Caco-2 (cell line): ENCODE measurements at regions of chr4 and their contacts with region 1.

Region 1: DNA sequence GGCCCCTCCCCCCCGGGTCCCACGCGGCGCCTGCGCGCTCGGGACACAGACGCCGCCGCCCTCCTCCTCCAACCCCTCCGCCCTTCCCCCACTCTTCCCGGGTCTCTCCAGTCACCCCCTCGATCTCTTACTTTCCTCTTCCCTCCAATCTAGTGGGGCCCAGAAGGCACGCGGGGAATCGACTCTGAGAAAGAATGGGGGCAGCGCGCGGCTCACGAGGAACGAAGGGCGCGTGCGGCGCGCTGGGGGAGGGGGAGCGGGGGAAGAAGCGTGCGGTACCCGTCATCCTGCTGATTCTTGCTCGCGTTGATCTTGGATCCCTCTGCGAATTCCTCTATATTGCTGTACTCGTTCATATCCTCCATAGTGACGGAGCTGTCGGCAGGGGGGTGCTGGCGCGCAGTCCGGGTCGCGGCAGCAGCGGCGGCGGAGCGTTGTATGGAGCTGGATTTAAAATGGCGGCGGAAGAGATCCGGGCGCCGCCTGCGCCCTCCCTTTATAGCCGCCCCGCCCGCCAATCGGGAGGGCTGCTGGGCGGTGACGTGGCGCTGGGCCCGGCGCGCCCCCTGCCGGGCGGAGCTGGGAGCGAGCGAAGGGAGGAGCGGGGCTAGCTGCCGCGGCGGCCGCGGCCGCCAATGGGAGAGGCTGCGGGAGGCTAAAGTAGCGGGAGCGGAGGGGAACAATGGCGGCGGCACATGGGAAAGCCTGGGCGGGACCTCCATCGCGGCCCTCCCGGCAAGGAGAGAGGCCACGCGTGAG is 1.1 kb downstream of the HNRNPDL start:
- DNase-seq: peak; percentile 89 to 96
- H3K4me3 ChIP-seq: peak overlapping the region; percentile 98
- H3K4me3 Mint-ChIP-seq: peak overlapping the region; percentile 89
- H3K27ac Mint-ChIP-seq: peak overlapping the region; percentile 99
- H3K4me1 ChIP-seq: peaks cover 11% of the 10 kb centered on the region
- H3K4me1 Mint-ChIP-seq: peaks cover 7% of the 10 kb centered on the region
- H3K27me3 ChIP-seq: no peaks in the 10 kb centered on the region
- H3K27me3 Mint-ChIP-seq: no peaks in the 10 kb centered on the region
- CTCF ChIP-seq: peak; percentile 51 to 93

Region 2: GRCh38 chr4:82415922-82416365 is 13.2 kb before region 1 on chr4:
- CTCF ChIA-PET with region 1: interaction called, 5 read pairs
- POLR2A ChIA-PET with region 1: interaction called, 11 read pairs
- intact Hi-C with region 1: no loop called
- DNase-seq: no peak
- H3K4me3 ChIP-seq: no peak overlapping the region
- H3K4me3 Mint-ChIP-seq: no peak overlapping the region
- H3K27ac Mint-ChIP-seq: no peak overlapping the region
- H3K4me1 ChIP-seq: no peaks in the 10 kb centered on the region
- H3K4me1 Mint-ChIP-seq: no peaks in the 10 kb centered on the region
- H3K27me3 ChIP-seq: no peaks in the 10 kb centered on the region
- H3K27me3 Mint-ChIP-seq: no peaks in the 10 kb centered on the region
- CTCF ChIP-seq: no peak

Region 3: GRCh38 chr4:82493721-82494425 is 64.7 kb after region 1 on chr4:
- CTCF ChIA-PET with region 1: no interaction called
- POLR2A ChIA-PET with region 1: no interaction called
- intact Hi-C with region 1: no loop called
- DNase-seq: no peak
- H3K4me3 ChIP-seq: no peak overlapping the region
- H3K4me3 Mint-ChIP-seq: no peak overlapping the region
- H3K27ac Mint-ChIP-seq: no peak overlapping the region
- H3K4me1 ChIP-seq: no peaks in the 10 kb centered on the region
- H3K4me1 Mint-ChIP-seq: peaks cover 6% of the 10 kb centered on the region
- H3K27me3 ChIP-seq: no peaks in the 10 kb centered on the region
- H3K27me3 Mint-ChIP-seq: no peaks in the 10 kb centered on the region
- CTCF ChIP-seq: no peak